Lower leg skin (tissue), 4 donors: ENCODE measurements at regions of chr9 and their contacts with region 1.

Region 1: GRCh38 chr9:101530077-101530711 is 3.5 kb upstream of the RNF20 start:
- DNase-seq: peak; percentile 75 to 89
- H3K4me3 ChIP-seq: no peak overlapping the region
- CTCF ChIP-seq: no peak
- POLR2A ChIP-seq: no peak

Region 2: DNA sequence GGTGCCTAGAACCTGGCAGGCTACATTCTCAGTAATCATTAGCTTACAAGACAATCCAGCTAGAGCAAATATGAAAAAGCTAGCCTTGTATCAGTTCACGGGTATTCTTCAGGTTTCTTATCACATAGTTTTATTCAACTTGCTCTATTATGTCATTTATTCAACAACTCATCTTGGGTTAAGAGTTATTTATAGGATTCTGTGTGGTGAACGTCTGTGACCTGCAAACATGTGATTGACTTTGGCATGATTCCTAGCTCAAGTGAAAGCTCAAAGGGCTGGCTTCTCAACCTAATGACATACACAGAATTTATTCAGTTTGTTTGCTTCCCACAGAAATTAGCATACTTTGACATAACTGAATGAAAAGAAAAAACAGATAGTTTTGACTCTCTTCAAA is 328.6 kb before region 1 on chr9:
- intact Hi-C with region 1: no loop called
- DNase-seq: no peak
- H3K4me3 ChIP-seq: no peak overlapping the region
- CTCF ChIP-seq: no peak
- POLR2A ChIP-seq: no peak

Region 3: DNA sequence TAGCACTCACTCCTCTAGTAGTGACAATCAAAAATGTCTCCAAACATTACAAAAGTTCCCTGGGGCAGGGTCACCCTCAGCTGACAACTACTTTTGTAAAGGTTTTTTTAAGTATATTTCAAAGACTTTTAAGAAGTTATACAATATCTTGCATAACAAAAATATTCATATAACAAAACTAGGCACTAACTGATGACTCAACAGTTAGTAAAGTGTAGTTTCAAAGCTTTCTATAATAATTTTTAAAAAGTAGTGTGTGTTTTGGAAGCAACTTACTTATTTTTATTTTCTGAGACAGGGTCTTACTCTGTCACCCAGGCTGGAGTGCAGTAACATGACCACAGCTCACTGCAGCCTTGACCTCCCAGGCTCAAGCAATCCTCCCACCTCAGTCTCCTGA is 230.3 kb before region 1 on chr9:
- intact Hi-C with region 1: no loop called
- DNase-seq: no peak
- H3K4me3 ChIP-seq: no peak overlapping the region
- CTCF ChIP-seq: no peak
- POLR2A ChIP-seq: no peak

Region 4: GRCh38 chr9:101462558-101462957 is 67.6 kb before region 1 on chr9:
- intact Hi-C with region 1: loop called (anchors 5 kb)
- DNase-seq: no peak
- H3K4me3 ChIP-seq: no peak overlapping the region
- CTCF ChIP-seq: no peak
- POLR2A ChIP-seq: no peak

Region 5: DNA sequence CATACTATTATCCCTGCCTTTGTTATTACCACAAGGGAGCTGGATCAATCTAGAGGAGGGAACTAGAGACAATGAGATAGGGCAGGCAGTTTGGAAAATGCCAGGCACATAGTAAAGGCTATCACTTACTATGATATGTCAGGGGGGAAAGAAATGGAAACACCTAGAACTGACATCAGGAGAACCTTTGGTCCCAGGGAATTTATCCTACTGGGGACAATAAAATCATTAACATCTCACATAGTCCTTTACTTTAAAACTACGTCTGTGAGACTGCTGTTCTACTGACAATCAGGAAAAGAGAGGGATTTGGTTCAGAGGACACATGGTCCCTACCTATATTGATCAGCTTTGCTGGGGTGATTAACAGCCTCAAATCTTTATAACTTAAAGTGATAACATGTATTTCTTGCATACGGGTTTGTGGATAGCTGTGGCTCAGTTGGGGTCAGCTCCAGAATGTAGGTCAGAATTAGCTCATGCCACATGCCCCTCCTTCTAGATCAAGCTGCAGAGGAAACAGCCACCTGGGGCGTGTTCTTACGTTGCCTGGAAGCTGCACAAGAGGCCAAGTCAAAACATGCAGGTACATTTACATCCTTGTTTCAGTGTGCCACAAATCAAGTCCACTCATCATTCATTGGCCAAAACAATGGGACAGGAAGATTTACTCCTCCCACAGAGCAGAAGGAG is 50.7 kb before region 1 on chr9:
- intact Hi-C with region 1: loop called (anchors 5 kb)
- DNase-seq: peak in 1 of 2 donors; percentile 69
- H3K4me3 ChIP-seq: no peak overlapping the region
- CTCF ChIP-seq: no peak
- POLR2A ChIP-seq: no peak

Region 6: DNA sequence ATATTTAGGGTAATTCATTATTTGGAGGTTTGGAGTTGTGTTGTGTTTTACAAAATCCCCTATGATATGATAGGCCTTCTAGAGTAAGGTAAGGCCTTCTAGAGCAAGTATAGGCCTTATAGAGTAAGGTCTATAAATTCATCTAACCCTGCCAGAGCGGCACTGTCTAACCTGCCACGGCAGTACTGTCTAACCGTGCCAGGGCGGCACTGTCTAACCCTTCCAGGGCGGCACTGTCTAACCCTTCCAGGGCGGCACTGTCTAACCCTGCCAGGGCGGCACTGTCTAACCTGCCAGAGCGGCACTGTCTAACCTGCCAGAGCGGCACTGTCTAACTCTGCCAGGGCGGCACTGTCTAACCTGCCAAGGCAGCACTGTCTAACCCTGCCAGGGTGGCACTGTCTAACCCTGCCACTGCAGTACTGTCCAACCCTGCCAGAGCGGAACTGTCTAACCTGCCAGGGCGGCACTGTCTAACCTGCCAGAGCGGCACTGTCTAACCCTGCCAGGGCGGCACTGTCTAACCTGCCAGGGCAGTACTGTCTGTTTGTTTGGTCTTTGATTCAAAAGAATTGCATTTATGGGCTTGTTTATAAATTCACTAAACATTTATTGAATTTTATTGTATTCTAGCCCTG is 13.0 kb after region 1 on chr9:
- intact Hi-C with region 1: no loop called
- DNase-seq: no peak
- H3K4me3 ChIP-seq: no peak overlapping the region
- CTCF ChIP-seq: no peak
- POLR2A ChIP-seq: no peak

Region 7: GRCh38 chr9:101738566-101739183 is 208.5 kb after region 1 on chr9 and contains the start of gene GRIN3A:
- intact Hi-C with region 1: no loop called
- DNase-seq: no peak
- H3K4me3 ChIP-seq: peak within 1 kb of the TSS; percentile 4
- CTCF ChIP-seq: no peak
- POLR2A ChIP-seq: no peak
- total RNA-seq, gene GRIN3A: not detected